Panc1 (cell line): ENCODE measurements at regions of chr4 and their contacts with region 1.

Region 1: GRCh38 chr4:109729116-109729717 is 653 bp downstream of the PLA2G12A start:
- DNase-seq: no peak
- ATAC-seq: peak; percentile 41; the same call in 1 of the 2 replicates
- H3K4me3 ChIP-seq: peak overlapping the region; percentile 76 to 78
- H3K27ac ChIP-seq: peak overlapping the region; percentile 54
- H3K4me1 ChIP-seq: peaks cover 6% of the 10 kb centered on the region
- H3K27me3 ChIP-seq: no peaks in the 10 kb centered on the region
- CTCF ChIP-seq: no peak

Region 2: GRCh38 chr4:109440948-109441347 is 288.3 kb before region 1 on chr4:
- CTCF ChIA-PET with region 1: no interaction called
- POLR2A ChIA-PET with region 1: interaction called, 12 read pairs
- in situ Hi-C with region 1: no loop called
- intact Hi-C with region 1: no loop called
- DNase-seq: no peak
- ATAC-seq: no peak
- H3K4me3 ChIP-seq: no peak overlapping the region
- H3K27ac ChIP-seq: no peak overlapping the region
- H3K4me1 ChIP-seq: peaks cover 12% of the 10 kb centered on the region
- H3K27me3 ChIP-seq: no peaks in the 10 kb centered on the region
- CTCF ChIP-seq: no peak

Region 3: GRCh38 chr4:109665783-109666485 is 63.3 kb before region 1 on chr4:
- CTCF ChIA-PET with region 1: no interaction called
- POLR2A ChIA-PET with region 1: no interaction called
- in situ Hi-C with region 1: no loop called
- intact Hi-C with region 1: no loop called
- DNase-seq: no peak
- ATAC-seq: no peak
- H3K4me3 ChIP-seq: no peak overlapping the region
- H3K27ac ChIP-seq: no peak overlapping the region
- H3K4me1 ChIP-seq: no peaks in the 10 kb centered on the region
- H3K27me3 ChIP-seq: no peaks in the 10 kb centered on the region
- CTCF ChIP-seq: no peak

Region 4: DNA sequence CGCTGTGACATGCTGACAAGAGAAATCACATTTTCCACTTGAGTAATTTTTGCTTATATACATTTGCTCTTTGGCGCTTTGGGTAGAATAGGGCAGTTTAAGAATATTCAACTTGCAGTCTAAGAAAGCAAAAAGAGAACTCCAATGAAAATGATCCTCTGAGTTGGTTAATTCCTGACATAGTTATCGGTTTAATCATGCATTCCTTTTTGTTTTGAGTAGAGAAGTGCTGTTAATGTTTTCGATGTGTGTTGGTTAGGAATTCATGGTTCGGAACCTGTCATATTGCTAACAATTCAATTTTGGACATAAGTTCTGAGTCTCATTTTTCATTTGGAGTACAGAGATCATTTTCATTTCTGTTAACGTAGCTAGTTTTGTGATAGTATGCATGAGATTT is 1594.3 kb after region 1 on chr4:
- CTCF ChIA-PET with region 1: no interaction called
- POLR2A ChIA-PET with region 1: no interaction called
- in situ Hi-C with region 1: no loop called
- intact Hi-C with region 1: no loop called
- DNase-seq: no peak
- ATAC-seq: no peak
- H3K4me3 ChIP-seq: no peak overlapping the region
- H3K27ac ChIP-seq: no peak overlapping the region
- H3K4me1 ChIP-seq: no peaks in the 10 kb centered on the region
- H3K27me3 ChIP-seq: no peaks in the 10 kb centered on the region
- CTCF ChIP-seq: no peak